ENCODE measurements at regions of chr22 and their contacts with region 1.

Region 1: DNA sequence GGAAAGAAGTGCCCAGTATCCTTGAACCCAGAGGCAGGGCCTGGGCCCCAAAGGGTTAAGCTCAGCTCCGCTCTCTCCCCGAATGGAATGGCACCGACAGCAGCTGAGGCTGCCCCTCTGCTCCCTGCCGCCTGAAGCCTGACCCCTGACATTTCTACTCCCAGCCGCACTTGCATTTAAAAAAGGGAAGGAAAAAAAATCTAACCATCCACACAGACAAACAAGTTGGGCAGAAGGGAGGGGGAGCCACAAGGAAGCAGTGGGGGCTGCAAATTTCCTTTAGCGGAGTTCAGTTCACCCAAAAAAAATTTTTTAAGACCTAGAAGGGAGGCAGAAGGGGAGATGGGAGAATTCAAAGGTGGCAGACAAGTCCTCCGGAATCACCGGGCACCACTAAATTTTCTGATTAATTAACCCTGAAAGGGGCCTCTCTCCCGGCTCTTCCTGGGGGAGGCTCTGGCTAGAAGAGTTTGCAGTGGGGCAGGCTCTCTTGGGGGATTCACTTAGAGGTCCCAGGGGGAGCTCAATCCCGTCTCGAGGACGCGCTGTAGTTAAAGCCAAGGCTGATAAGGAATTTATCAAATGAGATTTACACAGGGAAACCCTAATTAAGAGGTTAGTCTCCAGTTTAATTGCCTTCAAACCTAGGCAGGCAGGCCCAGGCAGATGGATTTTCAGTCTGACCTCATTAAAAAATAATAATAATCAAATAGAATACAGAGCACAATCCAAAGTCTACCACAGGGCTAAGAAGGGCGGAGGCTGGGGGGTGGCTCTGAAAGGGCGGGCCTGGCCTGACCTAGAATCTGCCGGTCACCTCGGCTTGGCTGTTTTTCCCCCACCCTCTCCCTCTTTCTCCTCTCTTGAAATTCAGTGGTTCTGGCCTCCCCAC is 25.6 kb downstream of the MN1 start:
- DNase-seq: no peak
- ATAC-seq: no peak
- H3K4me3 ChIP-seq: no peak overlapping the region
- H3K27ac ChIP-seq: no peak overlapping the region
- H3K4me1 ChIP-seq: no peaks in the 10 kb centered on the region
- H3K27me3 ChIP-seq: no peaks in the 10 kb centered on the region
- CTCF ChIP-seq: no peak

Region 2: DNA sequence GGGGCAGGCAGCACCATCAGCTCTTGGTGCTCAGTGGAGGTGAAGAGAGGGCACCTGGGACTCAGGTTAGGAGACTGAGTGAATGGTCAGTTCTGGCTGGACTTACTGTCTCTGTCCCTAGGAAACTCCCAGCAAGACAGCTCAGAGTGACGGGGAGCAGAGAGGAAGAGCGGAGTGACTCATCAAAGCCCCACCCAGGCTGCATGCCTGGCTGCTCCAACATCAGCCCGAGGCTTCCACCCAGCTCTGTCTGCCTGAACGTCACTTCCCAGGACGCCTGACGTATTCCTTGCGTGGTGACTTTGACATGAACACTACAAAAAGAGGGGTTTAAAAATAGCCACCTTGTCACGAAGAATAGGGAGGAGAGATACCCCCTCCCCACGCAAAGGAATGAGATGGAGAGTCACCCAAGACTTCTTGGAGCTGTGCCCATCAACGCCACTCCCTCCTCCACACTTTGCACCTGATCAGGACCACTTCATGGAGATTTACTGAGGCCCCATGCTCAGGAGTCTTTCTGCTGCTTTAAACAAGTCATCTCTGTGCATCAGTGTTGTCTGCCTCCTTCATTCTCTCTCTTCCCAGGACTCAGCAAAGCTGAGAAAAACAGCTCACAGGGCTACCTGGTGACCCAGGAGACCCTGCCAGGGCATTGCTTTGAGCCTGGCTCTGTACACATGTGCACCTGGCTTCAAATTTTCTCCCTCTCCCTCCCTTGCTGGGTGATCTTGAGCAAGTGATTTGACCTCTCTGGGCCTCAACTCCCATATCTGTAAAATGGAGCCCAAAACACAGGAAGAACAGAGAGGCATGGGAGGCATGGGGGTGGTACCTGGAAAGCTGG is 57.6 kb before region 1 on chr22:
- CTCF ChIA-PET with region 1: no interaction called
- POLR2A ChIA-PET with region 1: no interaction called
- in situ Hi-C with region 1: no loop called
- intact Hi-C with region 1: no loop called
- DNase-seq: peak; percentile 59
- ATAC-seq: peak; percentile 95
- H3K4me3 ChIP-seq: 0 out of 4 replicates have a peak overlapping the region, but pooled peaks of 1 of the 2 experiments have one; percentile 14
- H3K27ac ChIP-seq: no peak overlapping the region
- H3K4me1 ChIP-seq: no peaks in the 10 kb centered on the region
- H3K27me3 ChIP-seq: no peaks in the 10 kb centered on the region
- CTCF ChIP-seq: no peak

Region 3: GRCh38 chr22:27786965-27787364 is 11.0 kb after region 1 on chr22:
- CTCF ChIA-PET with region 1: interaction called, 14 read pairs
- POLR2A ChIA-PET with region 1: no interaction called
- in situ Hi-C with region 1: no loop called
- intact Hi-C with region 1: no loop called
- DNase-seq: no peak
- ATAC-seq: no peak
- H3K4me3 ChIP-seq: no peak overlapping the region
- H3K27ac ChIP-seq: no peak overlapping the region
- H3K4me1 ChIP-seq: no peaks in the 10 kb centered on the region
- H3K27me3 ChIP-seq: no peaks in the 10 kb centered on the region
- CTCF ChIP-seq: no peak